Naive thymus-derived CD4-positive, alpha-beta T cell (primary cell): ENCODE measurements at regions of chr6 and their contacts with region 1.

Region 1: DNA sequence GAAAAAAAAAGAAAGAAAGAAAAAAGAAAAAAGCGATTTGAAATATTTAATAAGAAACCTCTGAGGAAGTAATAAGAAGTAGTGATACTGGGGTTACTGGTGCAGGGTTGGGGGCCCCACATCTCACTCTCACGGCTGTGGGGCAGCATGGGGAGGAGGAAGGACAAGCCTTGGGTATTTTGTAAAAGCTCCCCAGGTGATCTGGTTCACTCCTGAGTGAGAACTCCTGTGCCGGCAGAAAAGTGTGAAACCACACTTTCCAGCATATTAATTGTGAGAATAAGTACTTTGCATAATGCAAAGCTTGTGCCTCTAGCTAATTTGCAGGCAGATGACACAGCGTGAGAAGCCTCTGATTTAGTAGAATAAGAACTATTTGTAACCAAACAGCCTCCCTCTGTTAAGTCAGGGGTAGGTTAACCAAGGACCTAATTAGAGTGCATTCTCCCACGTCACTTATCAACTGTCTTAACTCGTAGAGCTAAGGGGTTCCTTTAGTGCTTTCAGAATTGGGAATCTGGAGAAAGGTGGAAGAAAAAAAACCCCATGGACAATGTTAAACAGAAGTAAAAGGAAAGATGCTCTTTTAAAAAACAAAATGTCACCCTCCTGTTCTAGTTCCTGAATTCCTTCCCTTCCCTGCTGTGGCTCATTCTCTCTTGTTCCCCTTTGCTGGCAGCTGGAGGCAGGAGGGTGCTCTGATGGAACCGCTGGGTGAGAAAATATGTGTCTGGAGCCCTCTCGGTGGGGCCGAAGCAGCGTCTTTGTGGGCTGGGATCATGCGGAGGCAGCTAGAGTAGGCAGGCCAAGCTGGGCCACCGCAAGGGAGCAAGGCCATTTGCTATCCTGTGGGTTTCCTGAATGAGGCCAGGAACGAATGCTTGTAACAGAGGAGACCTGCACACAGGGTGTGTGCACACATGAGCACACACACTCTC is 108.7 kb downstream of the FYN start:
- DNase-seq: peak in 2 of 9 donors; percentile 48 to 63
- ATAC-seq: peak; percentile 23
- H3K4me3 ChIP-seq: peak overlapping the region; percentile 18
- H3K4me3 Mint-ChIP-seq: peak overlapping the region; percentile 48 to 94 (median 69)
- H3K27ac ChIP-seq: peak overlapping the region; percentile 97
- H3K27ac Mint-ChIP-seq: peak overlapping the region; percentile 84 to 100 (median 98)
- H3K4me1 ChIP-seq: peaks cover 90 to 93% of the 10 kb centered on the region in 2 donors
- H3K4me1 Mint-ChIP-seq: peaks cover 74 to 100% (median 99%) of the 10 kb centered on the region in 7 donors
- H3K27me3 ChIP-seq: no peaks in the 10 kb centered on the region
- H3K27me3 Mint-ChIP-seq: no peaks in the 10 kb centered on the region

Region 2: GRCh38 chr6:111715321-111715720 is 49.2 kb before region 1 on chr6:
- CTCF ChIA-PET with region 1: interaction called, 5 read pairs
- POLR2A ChIA-PET with region 1: interaction called, 4 read pairs
- intact Hi-C with region 1: loop called in 1 of 2 experiments (anchors 2 kb)
- DNase-seq: peak in 7 of 9 donors; percentile 39 to 72 (median 58)
- ATAC-seq: peak; percentile 83
- H3K4me3 ChIP-seq: no peak overlapping the region
- H3K4me3 Mint-ChIP-seq: peak overlapping the region; percentile 19 to 77 (median 66)
- H3K27ac ChIP-seq: peak overlapping the region; percentile 59
- H3K27ac Mint-ChIP-seq: peak overlapping the region; percentile 83 to 98 (median 93)
- H3K4me1 ChIP-seq: peaks cover 43 to 52% of the 10 kb centered on the region in 2 donors
- H3K4me1 Mint-ChIP-seq: peaks cover 36 to 88% (median 76%) of the 10 kb centered on the region in 7 donors
- H3K27me3 ChIP-seq: no peaks in the 10 kb centered on the region
- H3K27me3 Mint-ChIP-seq: no peaks in the 10 kb centered on the region

Region 3: DNA sequence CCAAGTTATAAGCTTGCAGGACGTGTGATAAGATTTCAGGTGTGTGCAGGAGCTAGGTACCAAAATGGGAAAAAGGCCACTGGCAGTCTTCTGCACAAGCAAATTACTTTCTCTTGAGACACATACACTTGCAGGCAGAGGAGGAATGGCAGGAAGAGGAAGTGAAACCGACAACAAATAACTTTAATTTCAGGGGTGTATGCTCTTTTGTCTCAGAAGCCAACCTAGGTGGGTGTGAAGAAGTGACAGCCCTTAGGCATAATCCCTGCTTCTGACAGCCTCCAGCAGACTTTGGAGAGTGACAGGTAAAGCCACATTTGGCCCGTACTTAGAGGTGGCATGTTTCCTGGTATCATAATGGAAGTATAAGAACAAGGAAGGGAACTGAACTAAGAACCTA is 40.0 kb before region 1 on chr6:
- CTCF ChIA-PET with region 1: interaction called, 3 read pairs
- POLR2A ChIA-PET with region 1: interaction called, 13 read pairs
- intact Hi-C with region 1: loop called in 1 of 2 experiments (anchors 2 kb)
- DNase-seq: peak in 7 of 9 donors; percentile 26 to 62 (median 56)
- ATAC-seq: peak; percentile 75
- H3K4me3 ChIP-seq: peak overlapping the region; percentile 11
- H3K4me3 Mint-ChIP-seq: peak overlapping the region; percentile 70 to 87 (median 76)
- H3K27ac ChIP-seq: peak overlapping the region; percentile 76
- H3K27ac Mint-ChIP-seq: peak overlapping the region; percentile 87 to 98 (median 92)
- H3K4me1 ChIP-seq: peaks cover 37 to 73% of the 10 kb centered on the region in 2 donors
- H3K4me1 Mint-ChIP-seq: peaks cover 43 to 97% (median 87%) of the 10 kb centered on the region in 7 donors
- H3K27me3 ChIP-seq: no peaks in the 10 kb centered on the region
- H3K27me3 Mint-ChIP-seq: no peaks in the 10 kb centered on the region

Region 4: GRCh38 chr6:111777357-111777756 is 12.8 kb after region 1 on chr6:
- CTCF ChIA-PET with region 1: interaction called, 4 read pairs
- POLR2A ChIA-PET with region 1: interaction called, 7 read pairs
- intact Hi-C with region 1: loop called (anchors 1 to 2 kb)
- DNase-seq: peak in 1 of 9 donors; percentile 36
- ATAC-seq: peak; percentile 73
- H3K4me3 ChIP-seq: no peak overlapping the region
- H3K4me3 Mint-ChIP-seq: peak overlapping the region in 2 of 10 donors; percentile 26 to 40
- H3K27ac ChIP-seq: peak overlapping the region; percentile 56
- H3K27ac Mint-ChIP-seq: peak overlapping the region; percentile 2 to 93 (median 81)
- H3K4me1 ChIP-seq: peaks cover 71 to 85% of the 10 kb centered on the region in 2 donors
- H3K4me1 Mint-ChIP-seq: peaks cover 46 to 97% (median 89%) of the 10 kb centered on the region in 7 donors
- H3K27me3 ChIP-seq: no peaks in the 10 kb centered on the region
- H3K27me3 Mint-ChIP-seq: no peaks in the 10 kb centered on the region

Region 5: GRCh38 chr6:111793711-111794111 is 29.2 kb after region 1 on chr6:
- CTCF ChIA-PET with region 1: interaction called, 4 read pairs
- POLR2A ChIA-PET with region 1: interaction called, 3 read pairs
- intact Hi-C with region 1: loop called in 1 of 2 experiments (anchors 2 kb)
- DNase-seq: peak in 1 of 9 donors; percentile 32
- ATAC-seq: peak; percentile 83
- H3K4me3 ChIP-seq: peak overlapping the region; percentile 63
- H3K4me3 Mint-ChIP-seq: peak overlapping the region in 9 of 10 donors; percentile 51 to 79 (median 62)
- H3K27ac ChIP-seq: peak overlapping the region; percentile 53
- H3K27ac Mint-ChIP-seq: peak overlapping the region in 8 of 9 donors; percentile 46 to 91 (median 84)
- H3K4me1 ChIP-seq: peaks cover 68% of the 10 kb centered on the region in 2 donors
- H3K4me1 Mint-ChIP-seq: peaks cover 6 to 67% (median 9%) of the 10 kb centered on the region in 7 donors
- H3K27me3 ChIP-seq: no peaks in the 10 kb centered on the region
- H3K27me3 Mint-ChIP-seq: no peaks in the 10 kb centered on the region

Region 6: DNA sequence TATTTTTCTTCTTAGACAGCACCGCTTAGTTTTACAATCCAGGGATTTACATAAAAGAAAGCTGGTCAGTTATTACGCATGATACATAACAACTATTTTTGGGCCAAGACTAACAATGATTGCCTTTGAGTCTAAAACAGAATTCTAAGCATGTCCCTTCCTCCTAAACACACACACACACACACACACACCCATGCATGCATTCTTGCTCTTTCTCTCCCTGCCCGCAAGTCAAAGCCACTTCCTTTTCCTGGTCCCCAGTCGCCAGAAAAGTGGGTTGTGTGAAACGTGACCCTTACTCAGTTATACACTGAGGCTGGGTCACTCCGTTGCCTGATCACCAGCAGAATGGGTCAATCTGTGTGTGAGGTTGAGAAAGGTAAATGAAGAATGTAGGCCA is 77.3 kb after region 1 on chr6:
- CTCF ChIA-PET with region 1: interaction called, 7 read pairs
- POLR2A ChIA-PET with region 1: interaction called, 4 read pairs
- intact Hi-C with region 1: loop called (anchors 2 kb)
- DNase-seq: peak in 7 of 9 donors; percentile 38 to 63 (median 61)
- ATAC-seq: no peak
- H3K4me3 ChIP-seq: no peak overlapping the region
- H3K4me3 Mint-ChIP-seq: no peak overlapping the region
- H3K27ac ChIP-seq: peak overlapping the region; percentile 62
- H3K27ac Mint-ChIP-seq: no peak overlapping the region
- H3K4me1 ChIP-seq: peaks cover 98 to 100% of the 10 kb centered on the region in 2 donors
- H3K4me1 Mint-ChIP-seq: peaks cover 0 to 55% (median 0%) of the 10 kb centered on the region in 7 donors
- H3K27me3 ChIP-seq: no peaks in the 10 kb centered on the region
- H3K27me3 Mint-ChIP-seq: no peaks in the 10 kb centered on the region